Activated CD4-positive, alpha-beta T cell treated with anti-CD3 and anti-CD28 coated beads, Interleukin-2, amount 10 ng/mL, durations not matched to agents 7 days and 5 days (primary cell): ENCODE measurements at regions of chr2 and their contacts with region 1.

Region 1: GRCh38 chr2:219294356-219295351 is 14.5 kb downstream of the PTPRN start:
- DNase-seq: peak; percentile 88
- H3K4me3 Mint-ChIP-seq: peak overlapping the region; percentile 67
- H3K27ac Mint-ChIP-seq: peak overlapping the region; percentile 77
- H3K4me1 Mint-ChIP-seq: peaks cover 31% of the 10 kb centered on the region
- H3K27me3 Mint-ChIP-seq: peaks cover 13% of the 10 kb centered on the region

Region 2: GRCh38 chr2:218727502-218728165 is 567.0 kb before region 1 on chr2:
- CTCF ChIA-PET with region 1: no interaction called
- POLR2A ChIA-PET with region 1: no interaction called
- DNase-seq: peak; percentile 16
- H3K4me3 Mint-ChIP-seq: no peak overlapping the region
- H3K27ac Mint-ChIP-seq: no peak overlapping the region
- H3K4me1 Mint-ChIP-seq: peaks cover 11% of the 10 kb centered on the region
- H3K27me3 Mint-ChIP-seq: no peaks in the 10 kb centered on the region

Region 3: GRCh38 chr2:219160186-219161017 is 134.3 kb before region 1 on chr2 and contains the start of gene NHEJ1:
- CTCF ChIA-PET with region 1: interaction called, 85 read pairs
- POLR2A ChIA-PET with region 1: no interaction called
- DNase-seq: peak; percentile 92
- H3K4me3 Mint-ChIP-seq: peak within 1 kb of the TSS; percentile 84
- H3K27ac Mint-ChIP-seq: peak within 1 kb of the TSS; percentile 96
- H3K4me1 Mint-ChIP-seq: peaks cover 31% of the 10 kb centered on the region
- H3K27me3 Mint-ChIP-seq: no peaks in the 10 kb centered on the region
- total RNA-seq, gene NHEJ1: 18.1 to 20.3 TPM

Region 4: DNA sequence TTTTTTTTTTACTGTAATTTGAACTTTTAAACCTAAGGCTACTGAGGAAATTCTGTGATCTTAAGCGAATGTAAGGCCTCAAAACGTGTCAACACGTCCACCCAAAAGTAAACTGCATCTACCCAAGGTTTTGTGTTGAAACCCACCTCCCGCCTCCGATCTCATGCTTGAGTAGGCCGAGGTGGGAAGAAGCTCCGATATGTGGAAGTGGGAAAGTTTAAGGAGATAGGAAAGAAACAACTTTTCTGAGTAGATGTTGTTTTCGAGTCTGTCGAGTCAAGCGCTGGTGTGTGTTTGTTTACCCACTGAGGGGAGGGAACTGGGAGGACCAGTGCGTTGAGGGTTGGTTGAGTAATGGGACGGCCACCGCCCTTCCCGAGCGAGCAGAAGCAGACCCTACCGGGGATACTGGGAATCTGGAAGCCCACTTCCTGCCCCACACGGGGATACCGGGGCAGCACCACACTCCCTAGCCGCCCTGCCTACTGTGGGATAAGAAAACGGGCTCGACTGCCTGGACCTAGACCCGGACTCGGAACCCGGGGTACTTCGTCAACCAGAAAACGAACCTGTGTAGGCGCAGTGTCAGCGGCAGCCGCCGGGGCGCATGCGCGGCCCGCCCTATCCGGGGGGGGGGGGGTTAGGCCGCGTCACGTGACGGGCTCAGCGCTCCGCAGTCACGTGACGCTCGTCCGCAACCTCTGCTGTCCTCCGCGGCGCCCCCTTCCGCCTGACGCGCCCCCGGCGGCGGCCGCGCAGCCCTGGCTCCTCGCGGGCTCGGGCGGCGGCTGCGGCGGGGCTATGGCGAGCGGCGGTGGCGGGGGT is 116.9 kb before region 1 on chr2 and contains the start of gene RETREG2:
- CTCF ChIA-PET with region 1: interaction called, 26 read pairs
- POLR2A ChIA-PET with region 1: interaction called, 4 read pairs
- DNase-seq: peak; percentile 81
- H3K4me3 Mint-ChIP-seq: peak within 1 kb of the TSS; percentile 87
- H3K27ac Mint-ChIP-seq: peak within 1 kb of the TSS; percentile 98
- H3K4me1 Mint-ChIP-seq: peaks cover 70% of the 10 kb centered on the region
- H3K27me3 Mint-ChIP-seq: no peaks in the 10 kb centered on the region
- total RNA-seq, gene RETREG2: 95.1 to 102 TPM

Region 5: GRCh38 chr2:219253753-219254590 is 40.7 kb before region 1 on chr2 and contains the start of gene TUBA4A:
- CTCF ChIA-PET with region 1: interaction called, 99 read pairs
- POLR2A ChIA-PET with region 1: interaction called, 6 read pairs
- DNase-seq: peak; percentile 91
- H3K4me3 Mint-ChIP-seq: peak within 1 kb of the TSS; percentile 99
- H3K27ac Mint-ChIP-seq: peak within 1 kb of the TSS; percentile 93
- H3K4me1 Mint-ChIP-seq: peaks cover 50% of the 10 kb centered on the region
- H3K27me3 Mint-ChIP-seq: no peaks in the 10 kb centered on the region
- total RNA-seq, gene TUBA4A: 261 to 339 TPM

Region 6: DNA sequence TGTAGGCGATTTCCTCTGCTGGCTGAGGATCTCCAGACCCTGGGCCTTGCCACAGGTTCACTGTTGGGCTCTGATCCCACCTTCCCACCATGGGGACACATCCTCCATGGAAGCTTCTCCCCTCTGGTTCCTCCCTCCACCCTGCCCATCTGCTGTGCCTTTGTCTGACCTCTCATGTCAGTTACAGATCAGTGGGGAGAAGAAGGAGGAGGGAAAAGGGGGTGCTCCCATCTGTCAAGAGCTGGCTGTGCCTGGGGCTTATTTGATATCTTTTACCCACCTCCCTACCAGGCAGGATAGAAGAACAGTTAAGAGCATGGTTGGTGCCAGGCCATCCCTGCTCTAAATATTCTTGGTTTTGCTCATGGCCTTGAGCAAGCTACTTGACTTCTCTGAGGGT is 27.8 kb before region 1 on chr2:
- CTCF ChIA-PET with region 1: interaction called, 23 read pairs
- POLR2A ChIA-PET with region 1: no interaction called
- DNase-seq: no peak
- H3K4me3 Mint-ChIP-seq: no peak overlapping the region
- H3K27ac Mint-ChIP-seq: no peak overlapping the region
- H3K4me1 Mint-ChIP-seq: no peaks in the 10 kb centered on the region
- H3K27me3 Mint-ChIP-seq: no peaks in the 10 kb centered on the region